CD8-positive, alpha-beta memory T cell (primary cell): ENCODE measurements at regions of chr7 and their contacts with region 1.

Region 1: DNA sequence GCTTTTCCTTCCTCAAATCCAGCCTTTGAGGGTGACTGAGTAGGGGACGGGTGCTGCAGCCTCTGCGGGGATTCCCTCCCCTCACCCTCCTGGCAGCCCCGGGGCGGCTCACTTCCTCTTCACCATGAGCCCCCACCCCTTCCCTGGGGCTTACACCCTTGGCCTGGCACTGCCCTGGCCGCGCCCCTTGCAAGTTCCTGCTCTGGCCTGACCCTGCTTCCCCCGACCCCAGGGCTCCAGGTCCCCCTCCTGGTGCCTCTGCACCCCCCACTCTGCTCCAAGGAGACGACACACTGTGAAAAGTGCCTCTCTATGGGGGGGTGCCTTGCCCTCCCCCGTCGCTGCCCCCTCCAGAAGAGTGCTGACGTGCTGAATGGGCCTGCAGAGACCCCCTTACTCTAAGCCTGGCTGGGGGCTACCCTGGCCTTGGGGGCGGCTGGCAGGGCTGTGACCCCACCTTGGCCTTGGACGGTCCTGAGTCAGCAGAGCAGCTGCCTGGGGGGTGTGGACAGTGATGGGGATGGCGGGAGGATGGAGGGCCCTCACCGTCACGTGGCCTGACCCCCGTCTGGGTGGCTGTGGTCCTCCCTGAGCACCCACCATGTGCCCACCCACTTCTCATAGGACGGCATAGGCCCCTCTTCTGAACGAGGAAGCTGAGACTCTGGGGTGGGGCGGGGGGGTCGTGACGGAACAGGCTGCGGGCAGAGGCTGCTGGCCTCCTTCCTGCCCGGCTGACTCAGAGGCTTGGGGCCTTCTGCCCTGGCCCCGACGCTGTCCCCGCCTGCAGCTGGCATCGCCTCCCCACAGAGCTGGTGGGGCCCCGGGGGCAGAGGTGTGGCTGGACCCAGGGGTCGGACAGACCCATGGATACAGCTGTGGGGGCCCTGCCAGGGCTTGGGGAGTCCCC is 9.8 kb downstream of the LFNG start:
- DNase-seq: peak; percentile 55 to 80 (median 60)
- H3K4me3 ChIP-seq: peak overlapping the region; percentile 53
- H3K4me3 Mint-ChIP-seq: peak overlapping the region; percentile 78 to 93 (median 81)
- H3K27ac ChIP-seq: peak overlapping the region; percentile 80
- H3K27ac Mint-ChIP-seq: peak overlapping the region; percentile 93 to 99 (median 97)
- H3K4me1 ChIP-seq: peaks cover 68% of the 10 kb centered on the region
- H3K4me1 Mint-ChIP-seq: peaks cover 28 to 65% (median 36%) of the 10 kb centered on the region in 3 donors
- H3K27me3 ChIP-seq: no peaks in the 10 kb centered on the region
- H3K27me3 Mint-ChIP-seq: no peaks in the 10 kb centered on the region

Region 2: GRCh38 chr7:2510909-2511768 is 18.3 kb before region 1 on chr7:
- CTCF ChIA-PET with region 1: interaction called, 10 read pairs
- POLR2A ChIA-PET with region 1: interaction called, 27 read pairs
- DNase-seq: peak in 4 of 5 donors; percentile 56 to 79 (median 70)
- H3K4me3 ChIP-seq: peak overlapping the region; percentile 66
- H3K4me3 Mint-ChIP-seq: peak overlapping the region; percentile 64 to 87 (median 76)
- H3K27ac ChIP-seq: peak overlapping the region; percentile 38
- H3K27ac Mint-ChIP-seq: peak overlapping the region; percentile 85 to 98 (median 96)
- H3K4me1 ChIP-seq: peaks cover 69% of the 10 kb centered on the region
- H3K4me1 Mint-ChIP-seq: peaks cover 46 to 64% (median 48%) of the 10 kb centered on the region in 3 donors
- H3K27me3 ChIP-seq: no peaks in the 10 kb centered on the region
- H3K27me3 Mint-ChIP-seq: no peaks in the 10 kb centered on the region

Region 3: GRCh38 chr7:2519119-2519930 is 10.1 kb before region 1 on chr7 and contains the start of gene LFNG:
- CTCF ChIA-PET with region 1: interaction called, 3 read pairs
- POLR2A ChIA-PET with region 1: interaction called, 12 read pairs
- DNase-seq: peak; percentile 77 to 87 (median 82)
- H3K4me3 ChIP-seq: peak within 1 kb of the TSS; percentile 77
- H3K4me3 Mint-ChIP-seq: peak within 1 kb of the TSS; percentile 96 to 99 (median 98)
- H3K27ac ChIP-seq: peak within 1 kb of the TSS; percentile 31
- H3K27ac Mint-ChIP-seq: peak within 1 kb of the TSS; percentile 66 to 97 (median 92)
- H3K4me1 ChIP-seq: peaks cover 38% of the 10 kb centered on the region
- H3K4me1 Mint-ChIP-seq: peaks cover 22 to 49% (median 27%) of the 10 kb centered on the region in 3 donors
- H3K27me3 ChIP-seq: no peaks in the 10 kb centered on the region
- H3K27me3 Mint-ChIP-seq: peaks cover 0 to 1% of the 10 kb centered on the region in 2 donors
- total RNA-seq, gene LFNG: 28.0 to 30.8 TPM